PC-3 (cell line): ENCODE measurements at regions of chr11 and their contacts with region 1.

Region 1: DNA sequence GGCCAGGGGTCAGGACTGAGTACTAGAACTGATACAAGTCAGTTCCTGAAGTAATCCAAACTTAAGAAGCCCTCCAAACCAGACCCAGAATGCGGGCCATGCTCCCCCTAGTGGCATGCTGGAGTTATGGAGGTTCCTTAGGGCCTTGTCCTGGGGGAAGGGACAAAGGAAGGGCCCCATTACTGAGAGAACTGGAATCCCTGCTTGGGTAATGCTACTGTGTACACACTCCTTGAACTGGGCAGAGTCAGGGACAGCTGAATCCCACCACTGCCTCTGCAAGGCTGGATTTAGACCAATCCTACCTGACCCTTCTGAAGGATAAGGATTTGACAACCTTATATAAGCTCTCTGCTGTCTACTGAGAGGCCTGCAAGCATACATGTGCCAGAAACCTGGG is 97.3 kb upstream of the AKIP1 start:
- DNase-seq: peak; percentile 79
- ATAC-seq: peak; percentile 58
- H3K4me3 ChIP-seq: no peak overlapping the region
- H3K27ac ChIP-seq: peak overlapping the region; percentile 53
- H3K4me1 ChIP-seq: peaks cover 30% of the 10 kb centered on the region
- H3K27me3 ChIP-seq: no peaks in the 10 kb centered on the region
- CTCF ChIP-seq: peak; percentile 88

Region 2: GRCh38 chr11:8794677-8795103 is 19.0 kb before region 1 on chr11:
- CTCF ChIA-PET with region 1: no interaction called
- POLR2A ChIA-PET with region 1: no interaction called
- intact Hi-C with region 1: no loop called
- DNase-seq: peak; percentile 39
- ATAC-seq: peak; percentile 56
- H3K4me3 ChIP-seq: no peak overlapping the region
- H3K27ac ChIP-seq: no peak overlapping the region
- H3K4me1 ChIP-seq: 0 out of 2 replicates have a peak, but pooled peaks cover 7% of the 10 kb centered on the region
- H3K27me3 ChIP-seq: no peaks in the 10 kb centered on the region
- CTCF ChIP-seq: peak; percentile 50; the same call in 1 of the 2 replicates

Region 3: GRCh38 chr11:8870411-8871170 is 56.9 kb after region 1 on chr11:
- CTCF ChIA-PET with region 1: interaction called, 4 read pairs
- POLR2A ChIA-PET with region 1: no interaction called
- intact Hi-C with region 1: loop called (anchors 2 kb)
- DNase-seq: peak; percentile 54
- ATAC-seq: peak; percentile 79
- H3K4me3 ChIP-seq: peak overlapping the region; percentile 81
- H3K27ac ChIP-seq: no peak overlapping the region
- H3K4me1 ChIP-seq: no peaks in the 10 kb centered on the region
- H3K27me3 ChIP-seq: no peaks in the 10 kb centered on the region
- CTCF ChIP-seq: 0 out of 2 replicates have a peak, but pooled peaks have one; percentile 15